A673 (cell line): ENCODE measurements at regions of chr18 and their contacts with region 1.

Region 1: DNA sequence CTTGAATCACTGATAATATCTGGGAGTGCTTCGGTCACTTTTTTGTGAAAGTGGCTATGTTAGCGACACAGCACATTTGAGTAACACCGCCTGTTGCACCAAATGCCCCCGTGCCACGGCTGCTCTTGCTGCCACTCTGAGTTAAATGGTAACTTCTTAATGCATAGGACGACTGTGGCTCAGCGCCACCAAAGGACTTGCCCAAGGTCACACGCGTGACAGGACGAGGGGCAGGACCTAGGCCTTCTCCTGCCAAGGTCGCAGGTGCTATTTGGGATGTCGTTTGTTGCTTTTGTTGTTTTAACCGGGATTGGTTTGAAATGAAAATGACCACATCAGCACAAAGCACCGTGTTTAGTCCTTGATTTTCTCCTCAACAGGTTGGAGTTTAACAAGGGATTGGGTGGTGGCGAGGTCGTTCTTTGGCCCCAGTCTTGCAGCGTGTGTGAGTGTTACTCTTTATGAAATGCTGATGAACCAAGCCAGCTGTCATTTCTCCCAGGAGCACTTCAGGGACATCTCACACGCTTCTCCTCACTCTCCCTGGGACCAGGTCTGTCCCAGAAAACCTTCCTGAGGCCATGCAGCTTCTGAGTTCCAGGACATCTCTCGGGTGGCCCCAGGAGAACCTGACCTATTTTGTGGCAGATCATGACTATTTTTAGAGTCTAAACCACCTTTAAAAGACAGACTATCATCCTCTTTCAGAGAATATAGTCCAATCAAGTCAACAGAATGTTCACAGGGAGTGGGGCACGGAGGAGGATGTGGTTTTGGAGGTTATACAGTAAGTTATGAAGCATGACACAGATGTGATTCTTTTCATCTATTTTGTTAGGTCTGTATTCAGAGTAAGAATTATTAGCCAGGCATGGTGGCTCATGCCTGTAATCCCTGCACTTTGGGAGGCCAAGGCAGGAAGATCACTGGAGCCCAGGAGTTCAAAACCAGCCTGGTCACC is 49.9 kb downstream of the MTCL1 start:
- DNase-seq: no peak
- H3K4me3 ChIP-seq: no peak overlapping the region
- H3K27ac ChIP-seq: no peak overlapping the region
- H3K4me1 ChIP-seq: peaks cover 22% of the 10 kb centered on the region
- H3K27me3 ChIP-seq: no peaks in the 10 kb centered on the region
- CTCF ChIP-seq: no peak

Region 2: GRCh38 chr18:8816816-8817215 is 61.5 kb after region 1 on chr18:
- CTCF ChIA-PET with region 1: no interaction called
- POLR2A ChIA-PET with region 1: no interaction called
- intact Hi-C with region 1: loop called (anchors 10 kb)
- DNase-seq: no peak
- H3K4me3 ChIP-seq: no peak overlapping the region
- H3K27ac ChIP-seq: no peak overlapping the region
- H3K4me1 ChIP-seq: no peaks in the 10 kb centered on the region
- H3K27me3 ChIP-seq: no peaks in the 10 kb centered on the region
- CTCF ChIP-seq: no peak

Region 3: GRCh38 chr18:9400197-9400596 is 644.9 kb after region 1 on chr18:
- CTCF ChIA-PET with region 1: no interaction called
- POLR2A ChIA-PET with region 1: interaction called, 10 read pairs
- intact Hi-C with region 1: no loop called
- DNase-seq: no peak
- H3K4me3 ChIP-seq: no peak overlapping the region
- H3K27ac ChIP-seq: no peak overlapping the region
- H3K4me1 ChIP-seq: no peaks in the 10 kb centered on the region
- H3K27me3 ChIP-seq: no peaks in the 10 kb centered on the region
- CTCF ChIP-seq: no peak